ENCODE measurements at regions of chr2 and their contacts with region 1.

Region 1: DNA sequence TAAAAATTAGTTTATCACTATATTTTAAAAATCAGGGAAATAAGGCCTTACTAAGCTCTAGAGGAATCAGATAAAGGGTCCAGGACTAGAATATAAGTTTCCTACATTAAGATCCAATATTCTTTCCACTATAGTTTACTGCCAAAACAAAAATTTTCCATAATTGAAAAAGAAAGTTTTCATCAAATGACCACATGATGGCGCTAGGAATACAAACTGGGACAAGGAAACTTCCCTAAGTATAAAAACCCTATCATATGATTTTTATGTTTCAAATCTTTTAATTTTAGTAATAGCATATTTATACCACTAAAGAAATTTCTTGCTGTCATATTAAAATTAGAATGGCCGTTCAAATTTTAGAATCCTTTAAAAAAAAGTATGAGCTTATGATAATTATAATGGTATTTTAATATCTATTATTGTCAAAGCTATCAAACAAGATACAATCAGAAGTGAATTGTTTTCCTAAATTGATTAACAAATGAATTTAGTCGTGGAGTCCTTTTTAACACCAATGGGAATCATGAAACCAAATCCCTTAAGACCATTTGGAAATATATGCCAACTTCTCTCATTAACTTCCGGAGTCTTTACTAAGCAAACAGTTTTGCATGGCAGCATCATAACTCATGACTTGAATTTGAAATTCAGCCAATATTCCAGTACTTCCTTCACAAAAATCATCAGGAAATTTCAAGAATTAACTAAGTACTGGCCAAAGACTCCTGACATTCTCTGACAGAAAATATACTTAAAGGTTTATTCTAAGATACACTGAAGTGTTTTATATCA is 70.3 kb downstream of the SCN1A start:
- DNase-seq: no peak
- H3K4me3 ChIP-seq: no peak overlapping the region
- H3K27ac ChIP-seq: no peak overlapping the region
- H3K27me3 ChIP-seq: no peaks in the 10 kb centered on the region
- CTCF ChIP-seq: peak; percentile 64

Region 2: DNA sequence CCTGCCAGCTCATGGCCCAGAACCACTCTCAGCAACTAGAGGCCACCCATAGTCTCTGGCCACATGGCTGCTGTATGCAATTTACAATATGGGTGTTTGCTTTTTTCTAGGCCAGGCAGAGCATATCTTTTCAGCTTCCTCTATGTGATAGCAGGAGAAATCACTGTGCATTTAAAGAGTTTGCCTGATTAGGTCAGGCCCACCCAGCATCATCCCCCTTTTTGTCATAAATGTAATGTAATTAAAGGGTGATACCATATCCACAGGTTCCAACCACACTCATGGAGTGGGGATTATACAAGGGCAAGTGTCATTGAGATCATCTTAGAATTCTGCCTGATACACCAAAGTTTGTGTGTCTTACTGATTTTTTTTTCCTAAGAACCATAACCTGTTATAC is 32.3 kb before region 1 on chr2:
- CTCF ChIA-PET with region 1: interaction called, 11 read pairs
- POLR2A ChIA-PET with region 1: no interaction called
- DNase-seq: no peak
- H3K4me3 ChIP-seq: no peak overlapping the region
- H3K27ac ChIP-seq: no peak overlapping the region
- H3K27me3 ChIP-seq: no peaks in the 10 kb centered on the region
- CTCF ChIP-seq: no peak

Region 3: GRCh38 chr2:166074430-166074829 is 16.9 kb after region 1 on chr2:
- CTCF ChIA-PET with region 1: interaction called, 32 read pairs
- POLR2A ChIA-PET with region 1: no interaction called
- DNase-seq: no peak
- H3K4me3 ChIP-seq: no peak overlapping the region
- H3K27ac ChIP-seq: no peak overlapping the region
- H3K27me3 ChIP-seq: no peaks in the 10 kb centered on the region
- CTCF ChIP-seq: no peak

Region 4: GRCh38 chr2:166092889-166093288 is 35.3 kb after region 1 on chr2:
- CTCF ChIA-PET with region 1: interaction called, 15 read pairs
- POLR2A ChIA-PET with region 1: no interaction called
- DNase-seq: peak; percentile 53
- H3K4me3 ChIP-seq: no peak overlapping the region
- H3K27ac ChIP-seq: peak overlapping the region; percentile 47
- H3K27me3 ChIP-seq: no peaks in the 10 kb centered on the region
- CTCF ChIP-seq: no peak

Region 5: GRCh38 chr2:166112193-166112605 is 54.6 kb after region 1 on chr2:
- CTCF ChIA-PET with region 1: interaction called, 38 read pairs
- POLR2A ChIA-PET with region 1: no interaction called
- DNase-seq: no peak
- H3K4me3 ChIP-seq: no peak overlapping the region
- H3K27ac ChIP-seq: no peak overlapping the region
- H3K27me3 ChIP-seq: no peaks in the 10 kb centered on the region
- CTCF ChIP-seq: no peak

Region 6: GRCh38 chr2:166180951-166181812 is 123.6 kb after region 1 on chr2:
- CTCF ChIA-PET with region 1: interaction called, 18 read pairs
- POLR2A ChIA-PET with region 1: no interaction called
- DNase-seq: no peak
- H3K4me3 ChIP-seq: no peak overlapping the region
- H3K27ac ChIP-seq: no peak overlapping the region
- H3K27me3 ChIP-seq: no peaks in the 10 kb centered on the region
- CTCF ChIP-seq: peak; percentile 61

Measured in AG04450 (cell line).